ENCODE measurements at regions of chr2 and their contacts with region 1.

Region 1: DNA sequence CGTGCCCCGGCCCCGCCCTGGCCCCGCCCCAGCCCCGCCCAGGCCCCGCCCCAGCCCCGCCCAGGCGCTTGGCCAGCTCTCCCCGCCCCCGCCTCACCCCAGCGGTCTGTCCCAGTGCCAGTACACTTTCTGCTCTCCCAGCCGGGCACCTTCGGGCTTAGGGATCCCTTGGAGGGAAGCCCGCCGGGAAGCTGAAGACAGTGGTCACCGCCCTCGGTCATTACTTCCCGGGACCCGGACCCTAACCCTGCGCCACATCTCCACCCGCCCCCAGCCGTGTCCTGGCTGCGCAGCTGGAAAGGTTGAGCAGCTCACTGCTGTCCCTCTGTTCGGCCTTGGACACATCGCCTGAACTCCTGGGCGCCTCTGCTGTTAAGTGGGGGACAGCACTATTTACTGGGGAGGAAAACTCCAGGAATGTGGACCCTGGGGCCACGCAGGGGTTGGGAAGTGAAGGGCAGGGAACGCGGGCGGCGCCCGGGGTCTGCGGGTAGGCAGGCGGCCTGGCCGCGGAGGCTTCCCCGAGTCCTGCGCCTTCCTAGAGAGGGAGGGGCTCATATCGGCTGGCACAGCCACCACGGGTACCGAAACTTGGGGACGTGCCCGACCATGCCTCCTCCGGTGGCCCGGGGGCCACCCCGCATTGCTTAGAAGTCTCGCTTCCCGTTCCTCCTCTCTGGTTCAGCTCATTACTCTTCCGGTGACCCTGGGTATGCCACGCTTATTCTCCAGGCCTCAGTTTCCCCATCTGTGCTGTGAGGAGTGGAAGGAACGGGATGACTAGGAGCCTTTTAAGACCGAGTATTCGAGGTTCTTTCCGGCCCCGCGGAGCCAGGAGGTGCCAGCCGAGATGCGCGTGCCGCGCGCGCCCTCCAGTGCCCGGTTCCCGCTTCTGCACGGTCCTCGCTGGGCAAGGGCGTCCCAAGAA is 121.0 kb downstream of the GYPC start:
- DNase-seq: peak; percentile 89
- ATAC-seq: peak; percentile 93

Region 2: DNA sequence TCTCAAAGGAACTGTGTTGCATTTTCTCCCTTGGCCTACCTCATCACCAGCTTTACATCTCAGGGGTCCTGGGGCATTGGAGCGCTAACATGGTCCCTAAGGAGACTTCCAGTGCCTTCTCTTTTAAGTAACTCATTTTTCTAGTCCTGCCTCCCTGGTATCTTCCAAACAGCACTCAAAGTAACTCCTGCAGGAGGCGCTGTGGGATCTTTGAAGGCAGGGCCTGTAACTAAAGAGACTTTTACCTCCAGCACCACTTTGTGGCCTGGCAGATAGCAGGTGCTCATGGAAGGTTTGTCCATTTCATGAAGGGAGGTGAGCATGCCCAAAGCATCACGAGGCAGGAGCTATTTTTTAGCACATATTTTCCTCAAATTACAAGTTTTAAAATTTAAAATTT is 532.0 kb before region 1 on chr2:
- intact Hi-C with region 1: loop called (anchors 2 kb)
- DNase-seq: no peak
- ATAC-seq: no peak

Region 3: DNA sequence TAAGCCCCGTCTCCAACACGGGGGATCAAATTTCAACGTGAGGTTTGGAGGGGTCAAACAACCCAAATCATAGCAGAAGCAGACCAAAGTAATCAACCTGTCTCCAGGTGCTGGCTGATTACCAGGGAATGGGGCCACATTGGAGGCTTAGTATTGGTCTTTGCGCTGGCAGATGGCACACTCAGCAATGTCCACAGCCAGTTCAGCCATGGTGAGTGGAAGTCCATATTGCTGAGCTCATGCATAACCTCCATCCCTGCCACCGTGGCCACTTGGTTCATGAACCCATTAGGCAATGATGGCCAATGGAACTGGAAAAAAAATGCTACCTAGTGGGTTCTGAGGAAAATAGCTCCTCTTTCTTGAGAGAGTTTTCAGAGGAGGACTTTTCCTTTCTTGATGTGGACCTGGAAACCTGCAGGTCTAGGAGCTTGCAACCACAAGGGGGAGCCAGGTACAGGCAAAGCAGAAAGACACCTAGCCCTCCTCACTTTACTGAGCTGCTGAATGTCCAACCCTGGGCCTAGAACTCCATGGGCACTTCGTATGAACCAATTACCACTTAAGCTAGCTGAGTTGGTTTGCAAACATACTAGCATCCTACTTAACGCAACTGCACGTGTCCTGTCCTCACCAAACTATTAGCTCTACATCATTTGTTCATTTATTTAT is 249.0 kb before region 1 on chr2:
- intact Hi-C with region 1: loop called (anchors 1 kb)
- DNase-seq: no peak
- ATAC-seq: peak; percentile 78

Region 4: GRCh38 chr2:126657636-126658318 is 119.2 kb before region 1 on chr2:
- intact Hi-C with region 1: loop called (anchors 5 kb)
- DNase-seq: peak; percentile 88
- ATAC-seq: peak; percentile 76

Region 5: DNA sequence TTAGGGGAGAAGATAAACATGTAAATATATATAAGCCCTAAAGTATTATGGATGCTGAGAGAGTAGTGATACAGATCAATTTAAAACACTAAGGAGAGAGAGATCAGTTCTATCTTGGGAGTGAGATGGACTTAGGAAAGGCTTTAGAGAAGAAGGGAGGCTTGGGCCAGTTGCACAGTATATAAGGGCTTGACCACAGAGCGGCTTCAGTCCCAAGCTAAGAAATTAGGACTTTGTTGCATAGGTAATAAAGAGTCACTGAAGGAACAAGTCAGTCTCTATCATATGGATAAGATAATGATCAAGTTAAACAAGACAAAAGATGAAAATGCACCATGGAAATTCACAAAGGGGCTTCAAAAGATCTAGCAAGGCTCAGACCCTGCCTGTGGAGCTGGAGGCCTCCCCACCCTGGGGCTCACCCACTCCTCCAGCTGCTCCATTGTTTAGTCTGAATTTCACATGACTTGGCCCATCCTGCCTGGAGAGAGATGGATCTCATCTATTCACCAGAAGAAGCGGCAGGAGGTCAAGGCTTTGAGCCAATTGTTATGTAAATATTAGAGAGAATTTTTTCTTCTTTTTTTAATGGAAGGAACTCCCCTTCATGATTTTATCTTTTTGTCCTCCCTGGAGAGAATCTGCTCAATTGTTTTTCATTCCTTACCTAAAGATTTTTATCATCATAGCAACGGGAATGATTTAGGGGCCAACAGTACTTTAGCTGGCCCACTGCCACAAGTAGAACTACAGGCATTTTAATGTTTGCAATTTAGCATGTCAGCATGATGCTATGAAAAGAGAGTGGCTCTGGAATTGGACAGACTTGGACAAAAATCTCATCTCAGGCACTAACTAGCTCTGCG is 77.0 kb before region 1 on chr2:
- intact Hi-C with region 1: loop called (anchors 10 kb)
- DNase-seq: no peak
- ATAC-seq: no peak

Region 6: GRCh38 chr2:127288274-127288673 is 511.3 kb after region 1 on chr2:
- intact Hi-C with region 1: no loop called
- DNase-seq: no peak
- ATAC-seq: no peak

Region 7: DNA sequence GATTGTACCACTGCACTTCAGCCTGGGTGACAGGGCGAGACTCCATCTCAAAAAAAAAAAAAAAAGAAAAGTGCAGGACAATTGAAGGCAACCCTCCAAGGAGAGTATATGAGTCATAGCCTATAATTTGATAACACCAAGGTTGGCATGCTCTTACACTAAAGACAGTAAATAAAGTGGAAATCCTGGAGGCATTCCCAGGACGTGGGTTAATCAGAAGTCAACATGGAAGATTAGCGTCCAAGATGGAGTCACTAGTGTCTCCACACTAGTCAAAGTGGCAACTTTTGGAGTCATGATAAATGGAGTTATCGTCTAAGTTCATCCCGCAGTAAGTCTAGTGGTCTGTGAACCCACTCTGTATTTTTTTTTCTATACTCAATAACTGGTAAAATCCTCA is 1292.8 kb after region 1 on chr2:
- intact Hi-C with region 1: no loop called
- DNase-seq: no peak
- ATAC-seq: no peak

Region 8: DNA sequence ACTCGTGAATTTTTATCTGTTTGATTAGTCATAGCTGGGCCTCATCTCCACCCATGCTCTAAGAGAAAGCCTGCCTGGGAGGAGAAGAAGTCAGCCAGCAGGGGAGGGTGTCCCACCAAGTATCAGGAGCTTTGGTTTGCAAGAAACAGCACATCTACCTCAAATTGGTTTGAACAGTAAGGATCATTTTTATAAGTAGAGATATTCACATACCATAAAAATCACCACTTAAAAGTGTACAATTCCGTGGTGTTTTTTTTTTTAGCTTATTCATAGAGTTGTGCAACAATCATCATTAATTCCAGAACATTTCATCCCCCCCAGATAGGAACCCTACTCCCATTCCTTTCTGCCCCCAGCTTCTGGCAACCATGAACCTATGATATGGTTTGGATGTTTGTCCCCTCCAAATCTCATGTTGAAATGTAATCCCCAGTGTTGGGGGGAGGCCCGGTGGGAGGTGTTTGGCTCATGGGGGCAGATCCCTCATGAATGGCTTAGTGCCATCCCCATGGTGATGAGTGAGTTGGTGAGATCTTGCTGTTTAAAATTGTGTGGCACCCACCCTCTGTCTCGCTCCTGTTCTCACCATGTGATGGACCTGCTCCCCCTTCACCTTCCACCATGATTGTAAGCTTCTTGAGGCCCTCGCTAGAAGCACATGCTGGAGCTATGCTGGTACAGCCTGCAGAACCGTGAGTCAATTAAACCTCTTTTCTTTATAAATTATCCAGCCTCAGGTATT is 1577.9 kb after region 1 on chr2:
- intact Hi-C with region 1: no loop called
- DNase-seq: no peak
- ATAC-seq: no peak